Sigmoid colon (tissue), 7 donors: ENCODE measurements at regions of chr10 and their contacts with region 1.

Region 1: DNA sequence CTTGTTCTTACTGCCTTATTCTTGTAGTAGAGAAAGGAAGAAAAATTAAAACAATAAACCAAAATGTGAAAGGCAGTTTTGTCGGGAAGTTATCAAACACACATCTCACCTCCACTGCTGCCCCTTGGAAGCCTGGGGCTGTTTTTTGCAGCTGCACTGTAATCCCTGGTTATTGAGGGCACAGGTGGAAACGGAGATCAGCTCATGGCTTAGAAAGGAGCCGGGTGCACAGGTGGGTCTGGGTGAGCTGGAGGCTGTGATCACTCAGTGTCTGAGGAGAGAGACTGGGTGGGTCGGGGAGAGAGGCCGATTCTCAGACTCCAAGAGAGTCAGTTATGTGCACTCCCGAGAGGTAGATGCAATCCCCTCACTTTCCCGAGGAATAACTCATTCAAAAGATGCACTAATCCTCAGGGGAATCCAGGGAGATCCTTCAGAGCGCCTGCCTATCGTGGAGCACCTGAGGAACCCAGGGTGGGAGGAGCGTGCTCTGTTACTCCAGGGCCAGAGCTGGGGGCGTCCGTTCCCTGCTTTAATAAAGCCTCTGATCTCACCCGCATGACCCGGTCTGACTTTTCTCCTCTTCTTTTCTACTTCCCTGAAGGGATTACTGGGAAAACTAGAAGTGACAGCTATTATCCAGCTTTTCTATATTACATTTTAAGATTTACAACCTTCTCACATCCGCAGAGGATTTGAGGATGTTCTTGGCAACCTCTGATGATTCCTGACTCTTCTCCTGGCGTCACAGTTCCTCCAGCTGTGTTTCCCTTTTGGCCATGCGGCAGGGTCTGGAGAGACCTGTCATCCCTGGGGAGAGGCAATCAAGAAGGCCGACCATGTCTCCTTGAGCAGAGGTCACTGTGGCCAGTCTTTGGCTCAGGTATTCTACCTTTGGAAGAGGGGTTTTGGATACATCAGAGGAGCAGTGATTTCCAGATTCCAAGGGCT is 82.1 kb downstream of the CAMK1D start:
- DNase-seq: peak; percentile 67
- H3K4me3 ChIP-seq: no peak overlapping the region
- H3K27ac ChIP-seq: no peak overlapping the region
- H3K4me1 ChIP-seq: peaks cover 0 to 8% (median 1%) of the 10 kb centered on the region in 4 donors
- H3K27me3 ChIP-seq: no peaks in the 10 kb centered on the region
- CTCF ChIP-seq: no peak
- EP300 ChIP-seq: no peak
- POLR2A ChIP-seq: no peak

Region 2: DNA sequence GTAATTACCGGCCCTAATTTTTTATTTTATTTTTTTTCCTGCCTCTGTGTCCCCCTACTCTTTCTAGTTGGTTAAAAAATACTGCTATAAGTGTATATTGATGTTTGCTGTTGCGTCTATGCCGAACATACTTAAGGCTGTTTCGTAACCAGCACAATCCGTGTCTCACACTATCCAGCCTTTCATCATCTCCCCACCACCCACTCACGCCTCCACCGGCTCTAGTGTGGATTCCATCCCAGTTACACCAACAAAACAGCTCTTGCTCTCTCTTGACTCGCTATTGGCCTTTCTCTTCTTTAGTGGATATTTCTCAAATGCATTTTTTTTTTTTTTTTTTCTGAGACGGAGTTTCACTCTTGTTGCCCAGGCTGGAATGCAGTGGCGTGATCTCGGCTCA is 152.1 kb before region 1 on chr10:
- intact Hi-C with region 1: loop called (anchors 10 kb)
- DNase-seq: no peak
- H3K4me3 ChIP-seq: no peak overlapping the region
- H3K27ac ChIP-seq: no peak overlapping the region
- H3K4me1 ChIP-seq: no peaks in the 10 kb centered on the region
- H3K27me3 ChIP-seq: no peaks in the 10 kb centered on the region
- CTCF ChIP-seq: no peak
- EP300 ChIP-seq: no peak
- POLR2A ChIP-seq: no peak

Region 3: GRCh38 chr10:13422566-13423199 is 991.3 kb after region 1 on chr10:
- intact Hi-C with region 1: no loop called
- DNase-seq: no peak
- H3K4me3 ChIP-seq: no peak overlapping the region
- H3K27ac ChIP-seq: no peak overlapping the region
- H3K4me1 ChIP-seq: no peaks in the 10 kb centered on the region
- H3K27me3 ChIP-seq: no peaks in the 10 kb centered on the region
- CTCF ChIP-seq: no peak
- EP300 ChIP-seq: no peak
- POLR2A ChIP-seq: no peak